ENCODE measurements at regions of chr11 and their contacts with region 1.

Region 1: DNA sequence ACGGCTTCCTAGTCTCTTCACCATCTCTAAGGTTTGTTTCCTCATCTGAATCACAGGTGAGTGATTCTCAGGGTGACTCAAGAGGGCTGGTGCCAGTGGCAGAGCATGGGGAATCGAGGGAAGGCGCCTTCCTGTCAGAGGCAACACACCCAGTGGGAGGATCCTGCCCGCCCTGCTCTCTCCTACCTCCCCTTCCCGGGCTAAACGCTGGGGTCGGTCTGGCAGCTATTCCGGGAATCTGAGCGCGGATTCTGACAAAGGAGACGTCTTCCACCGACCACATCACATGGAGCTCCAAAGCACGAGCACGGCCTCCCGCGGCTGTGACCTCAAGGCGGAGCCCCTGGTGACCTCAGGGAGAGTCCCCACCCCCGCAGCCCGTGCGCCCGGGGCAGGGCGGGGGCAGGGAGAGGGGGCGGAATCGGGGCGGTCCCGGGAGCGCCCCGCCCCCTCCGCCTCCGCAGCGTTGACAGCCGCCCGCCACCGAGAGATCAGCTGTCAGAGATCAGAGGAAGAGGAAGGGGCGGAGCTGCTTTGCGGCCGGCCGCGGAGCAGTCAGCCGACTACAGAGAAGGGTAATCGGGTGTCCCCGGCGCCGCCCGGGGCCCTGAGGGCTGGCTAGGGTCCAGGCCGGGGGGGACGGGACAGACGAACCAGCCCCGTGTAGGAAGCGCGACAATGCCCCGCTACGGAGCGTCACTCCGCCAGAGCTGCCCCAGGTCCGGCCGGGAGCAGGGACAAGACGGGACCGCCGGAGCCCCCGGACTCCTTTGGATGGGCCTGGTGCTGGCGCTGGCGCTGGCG is at the start of gene SMPD1:
- DNase-seq: peak; percentile 94
- ATAC-seq: peak; percentile 90
- H3K4me3 ChIP-seq: peak within 1 kb of the TSS; percentile 72
- H3K27ac ChIP-seq: peak within 1 kb of the TSS; percentile 79
- H3K4me1 ChIP-seq: peaks cover 12% of the 10 kb centered on the region
- H3K27me3 ChIP-seq: no peaks in the 10 kb centered on the region
- CTCF ChIP-seq: no peak
- total RNA-seq, gene SMPD1: 12.1 and 12.9 TPM in 2 replicates

Region 2: GRCh38 chr11:5767056-5767455 is 623.1 kb before region 1 on chr11:
- CTCF ChIA-PET with region 1: no interaction called
- POLR2A ChIA-PET with region 1: no interaction called
- intact Hi-C with region 1: no loop called
- DNase-seq: no peak
- ATAC-seq: no peak
- H3K4me3 ChIP-seq: no peak overlapping the region
- H3K27ac ChIP-seq: no peak overlapping the region
- H3K4me1 ChIP-seq: no peaks in the 10 kb centered on the region
- H3K27me3 ChIP-seq: peaks cover 8% of the 10 kb centered on the region; the same call in 1 of the 2 replicates
- CTCF ChIP-seq: no peak

Region 3: GRCh38 chr11:5992604-5993251 is 397.4 kb before region 1 on chr11:
- CTCF ChIA-PET with region 1: no interaction called
- POLR2A ChIA-PET with region 1: no interaction called
- intact Hi-C with region 1: no loop called
- DNase-seq: peak; percentile 33
- ATAC-seq: no peak
- H3K4me3 ChIP-seq: no peak overlapping the region
- H3K27ac ChIP-seq: no peak overlapping the region
- H3K4me1 ChIP-seq: no peaks in the 10 kb centered on the region
- H3K27me3 ChIP-seq: no peaks in the 10 kb centered on the region
- CTCF ChIP-seq: peak; percentile 66

Region 4: GRCh38 chr11:6419009-6419631 is 29.0 kb after region 1 on chr11 and contains the start of gene APBB1:
- CTCF ChIA-PET with region 1: no interaction called
- POLR2A ChIA-PET with region 1: interaction called, 3 read pairs
- intact Hi-C with region 1: loop called (anchors 2 kb)
- DNase-seq: peak; percentile 63
- ATAC-seq: peak; percentile 83
- H3K4me3 ChIP-seq: peak within 1 kb of the TSS; percentile 90
- H3K27ac ChIP-seq: no peak within 1 kb of the TSS
- H3K4me1 ChIP-seq: peaks cover 4% of the 10 kb centered on the region; the same call in 1 of the 2 replicates
- H3K27me3 ChIP-seq: no peaks in the 10 kb centered on the region
- CTCF ChIP-seq: 0 out of 2 replicates have a peak, but pooled peaks have one; percentile 9
- total RNA-seq, gene APBB1: 17.5 and 24.7 TPM in 2 replicates

Region 5: GRCh38 chr11:6431861-6432260 is 41.7 kb after region 1 on chr11:
- CTCF ChIA-PET with region 1: no interaction called
- POLR2A ChIA-PET with region 1: interaction called, 11 read pairs
- intact Hi-C with region 1: no loop called
- DNase-seq: peak; percentile 97
- ATAC-seq: peak; percentile 93
- H3K4me3 ChIP-seq: no peak overlapping the region
- H3K27ac ChIP-seq: no peak overlapping the region
- H3K4me1 ChIP-seq: peaks cover 18% of the 10 kb centered on the region
- H3K27me3 ChIP-seq: no peaks in the 10 kb centered on the region
- CTCF ChIP-seq: no peak

Region 6: GRCh38 chr11:6473481-6474422 is 83.6 kb after region 1 on chr11 and contains the start of gene TRIM3:
- CTCF ChIA-PET with region 1: no interaction called
- POLR2A ChIA-PET with region 1: no interaction called
- intact Hi-C with region 1: loop called (anchors 2 kb)
- DNase-seq: peak; percentile 82
- ATAC-seq: peak; percentile 73
- H3K4me3 ChIP-seq: peak within 1 kb of the TSS; percentile 95
- H3K27ac ChIP-seq: peak within 1 kb of the TSS; percentile 84
- H3K4me1 ChIP-seq: peaks cover 28% of the 10 kb centered on the region
- H3K27me3 ChIP-seq: no peaks in the 10 kb centered on the region
- CTCF ChIP-seq: peak; percentile 49; the same call in 1 of the 2 replicates
- total RNA-seq, gene TRIM3: 20.3 and 24.7 TPM in 2 replicates

Measured in PC-3 (cell line).